ENCODE measurements at regions of chr16 and their contacts with region 1.

Region 1: DNA sequence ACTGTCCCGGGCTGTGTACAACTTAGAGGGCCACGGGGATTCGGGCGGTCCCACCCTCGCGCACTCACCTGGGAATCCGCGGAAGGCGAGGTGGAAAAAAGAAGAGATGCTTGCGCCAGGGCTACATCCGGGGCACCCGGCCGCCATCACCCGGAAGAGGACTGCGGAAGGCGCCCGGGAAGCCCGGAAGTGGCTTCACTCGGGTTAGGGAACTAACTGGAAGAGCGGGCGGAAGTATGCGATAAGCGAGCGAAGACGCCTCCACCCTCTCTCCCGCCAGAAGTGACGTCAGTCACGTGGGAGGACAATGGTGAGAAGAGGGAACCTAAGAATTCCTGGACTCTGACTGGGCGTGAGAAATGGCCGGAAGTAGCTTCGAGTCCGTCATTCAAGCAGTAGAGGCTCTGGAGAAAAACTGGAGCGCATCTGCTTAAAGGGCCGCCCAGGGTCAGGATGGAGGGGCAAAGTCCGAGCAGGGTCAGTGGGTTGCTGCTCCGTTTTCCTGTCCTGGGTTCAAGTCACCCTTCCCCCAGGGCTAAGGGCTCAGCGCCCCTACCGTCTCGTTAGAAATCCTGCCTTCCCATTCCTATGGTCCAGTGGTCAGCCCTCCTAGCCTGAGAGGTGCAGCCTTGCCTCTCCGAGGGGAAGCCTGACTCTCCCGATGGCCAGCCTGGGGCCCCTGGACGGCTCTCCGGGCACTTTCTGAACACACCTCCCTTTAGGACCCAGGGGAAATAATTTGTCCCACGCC is at the start of gene CD2BP2:
- DNase-seq: peak; percentile 88
- ATAC-seq: peak; percentile 81
- H3K4me3 Mint-ChIP-seq: peak within 1 kb of the TSS; percentile 94
- H3K27ac Mint-ChIP-seq: peak within 1 kb of the TSS; percentile 90
- H3K4me1 Mint-ChIP-seq: peaks cover 31% of the 10 kb centered on the region
- H3K27me3 Mint-ChIP-seq: no peaks in the 10 kb centered on the region
- total RNA-seq, gene CD2BP2: 71.3 to 72.5 TPM

Region 2: DNA sequence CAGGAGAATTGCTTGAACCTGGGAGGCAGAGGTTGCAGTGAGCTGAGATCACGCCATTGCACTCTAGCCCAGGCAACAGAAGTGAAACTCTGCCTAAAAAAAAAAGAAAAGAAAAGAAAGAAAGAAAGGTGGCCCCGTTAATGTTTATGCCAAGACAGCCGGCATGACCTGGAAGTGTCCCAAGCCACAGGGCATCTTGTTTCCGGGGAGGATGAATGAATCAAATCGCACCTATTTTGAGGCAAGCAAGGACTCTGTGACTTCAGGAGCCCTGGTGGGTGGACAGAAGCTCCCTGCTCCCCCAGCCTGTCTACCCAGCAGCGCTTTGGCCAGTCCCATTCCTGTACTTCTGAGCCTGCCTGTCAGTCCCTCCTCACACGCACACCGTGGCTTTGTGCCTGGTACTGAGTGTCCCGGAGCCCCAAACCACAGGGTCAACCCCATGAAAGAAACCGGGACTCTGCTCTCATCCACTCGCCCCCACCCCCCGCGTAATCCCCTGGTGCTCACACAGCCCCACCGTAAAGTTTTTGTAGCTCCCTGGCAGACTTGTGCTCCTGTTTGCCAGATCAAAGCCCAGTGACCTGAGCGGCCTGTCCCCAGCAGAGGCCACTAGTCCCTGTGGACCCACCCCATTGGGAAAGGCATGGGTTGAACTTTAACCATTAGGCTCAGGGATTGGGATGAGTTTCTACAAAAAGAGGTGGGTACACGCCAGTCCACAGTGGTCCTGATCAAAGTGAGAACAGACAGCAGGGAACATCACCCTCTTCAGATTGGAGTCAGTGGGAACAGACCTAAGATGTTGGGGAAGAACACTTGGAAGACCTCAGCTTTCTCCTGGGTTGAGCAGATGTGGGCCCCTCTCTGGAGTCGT is 19.5 kb before region 1 on chr16:
- POLR2A ChIA-PET with region 1: interaction called, 13 read pairs
- DNase-seq: no peak
- ATAC-seq: peak; percentile 0
- H3K4me3 Mint-ChIP-seq: peak overlapping the region; percentile 88
- H3K27ac Mint-ChIP-seq: peak overlapping the region; percentile 84
- H3K4me1 Mint-ChIP-seq: peaks cover 17% of the 10 kb centered on the region
- H3K27me3 Mint-ChIP-seq: no peaks in the 10 kb centered on the region